Activated naive CD4-positive, alpha-beta T cell treated with anti-CD3 and anti-CD28 coated beads for 36 hours (primary cell): ENCODE measurements at regions of chr20 and their contacts with region 1.

Region 1: GRCh38 chr20:34676642-34677373 is at the start of gene PIGU:
- DNase-seq: peak; percentile 97
- H3K4me3 Mint-ChIP-seq: peak within 1 kb of the TSS; percentile 97
- H3K27ac Mint-ChIP-seq: peak within 1 kb of the TSS; percentile 90
- H3K4me1 Mint-ChIP-seq: peaks cover 29% of the 10 kb centered on the region
- H3K27me3 Mint-ChIP-seq: no peaks in the 10 kb centered on the region
- total RNA-seq, gene PIGU: 18.8 to 18.9 TPM

Region 2: GRCh38 chr20:33489495-33490022 is 1187.2 kb before region 1 on chr20:
- CTCF ChIA-PET with region 1: no interaction called
- intact Hi-C with region 1: loop called (anchors 5 kb)
- DNase-seq: peak; percentile 100
- H3K4me3 Mint-ChIP-seq: peak overlapping the region; percentile 79
- H3K27ac Mint-ChIP-seq: peak overlapping the region; percentile 81
- H3K4me1 Mint-ChIP-seq: peaks cover 17% of the 10 kb centered on the region
- H3K27me3 Mint-ChIP-seq: no peaks in the 10 kb centered on the region

Region 3: GRCh38 chr20:34069341-34070078 is 607.3 kb before region 1 on chr20:
- CTCF ChIA-PET with region 1: no interaction called
- intact Hi-C with region 1: no loop called
- DNase-seq: peak; percentile 72
- H3K4me3 Mint-ChIP-seq: no peak overlapping the region
- H3K27ac Mint-ChIP-seq: no peak overlapping the region
- H3K4me1 Mint-ChIP-seq: peaks cover 28% of the 10 kb centered on the region
- H3K27me3 Mint-ChIP-seq: no peaks in the 10 kb centered on the region

Region 4: DNA sequence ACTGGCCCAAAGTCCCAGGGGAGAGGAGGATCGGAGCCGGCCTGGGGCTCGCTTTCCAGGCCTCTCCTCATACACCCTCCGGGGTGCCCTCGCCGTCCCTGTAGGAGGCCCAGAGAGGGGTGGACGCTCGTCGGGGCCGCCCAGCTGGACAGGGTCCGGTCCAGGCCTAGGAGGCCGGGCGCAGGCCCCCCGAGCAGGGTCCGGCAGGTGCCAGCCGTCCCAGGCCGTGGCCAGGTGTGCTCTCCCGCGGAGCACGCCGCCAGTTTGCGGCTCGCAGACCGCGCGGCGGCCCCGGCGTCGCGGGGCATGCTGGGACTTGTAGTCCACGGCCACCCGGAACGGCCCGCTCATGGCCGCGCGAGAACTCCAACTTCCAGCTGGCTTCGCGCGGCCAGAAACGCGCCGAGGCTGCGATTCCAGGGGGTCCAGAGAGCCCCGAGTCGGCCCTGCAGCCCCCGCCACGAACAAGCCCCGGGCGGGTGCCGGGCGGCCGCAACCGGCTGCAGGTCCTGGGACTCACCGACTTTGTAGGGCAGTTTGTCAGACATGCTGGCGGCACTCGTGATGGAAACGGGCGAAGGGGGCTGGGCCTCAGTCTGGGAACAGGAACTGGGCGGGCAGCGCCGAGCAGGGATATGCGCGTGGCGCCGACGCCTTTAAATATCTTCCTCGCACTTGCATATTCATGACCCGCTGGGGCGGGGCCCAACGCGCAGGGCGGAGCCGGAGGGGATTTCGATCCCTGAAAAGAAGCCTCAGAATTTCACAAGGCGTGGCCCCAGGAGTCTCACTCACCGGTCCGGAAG is 373.9 kb before region 1 on chr20 and contains the start of gene AHCY:
- CTCF ChIA-PET with region 1: no interaction called
- intact Hi-C with region 1: loop called (anchors 1 kb)
- DNase-seq: peak; percentile 95
- H3K4me3 Mint-ChIP-seq: peak within 1 kb of the TSS; percentile 84
- H3K27ac Mint-ChIP-seq: peak within 1 kb of the TSS; percentile 86
- H3K4me1 Mint-ChIP-seq: peaks cover 4% of the 10 kb centered on the region
- H3K27me3 Mint-ChIP-seq: no peaks in the 10 kb centered on the region
- total RNA-seq, gene AHCY: 258 to 261 TPM

Region 5: GRCh38 chr20:34363062-34363464 is 313.7 kb before region 1 on chr20 and contains the start of gene ITCH:
- CTCF ChIA-PET with region 1: no interaction called
- intact Hi-C with region 1: loop called (anchors 2 kb)
- DNase-seq: peak; percentile 96
- H3K4me3 Mint-ChIP-seq: peak within 1 kb of the TSS; percentile 97
- H3K27ac Mint-ChIP-seq: peak within 1 kb of the TSS; percentile 95
- H3K4me1 Mint-ChIP-seq: peaks cover 34% of the 10 kb centered on the region
- H3K27me3 Mint-ChIP-seq: no peaks in the 10 kb centered on the region
- total RNA-seq, gene ITCH: 35.3 to 40.0 TPM

Region 6: GRCh38 chr20:34516247-34517113 is 160.3 kb before region 1 on chr20 and contains the start of gene DYNLRB1:
- CTCF ChIA-PET with region 1: no interaction called
- intact Hi-C with region 1: loop called (anchors 2 kb)
- DNase-seq: peak; percentile 96
- H3K4me3 Mint-ChIP-seq: peak within 1 kb of the TSS; percentile 98
- H3K27ac Mint-ChIP-seq: peak within 1 kb of the TSS; percentile 96
- H3K4me1 Mint-ChIP-seq: peaks cover 29% of the 10 kb centered on the region
- H3K27me3 Mint-ChIP-seq: no peaks in the 10 kb centered on the region
- total RNA-seq, gene DYNLRB1: 81.9 to 92.9 TPM

Region 7: DNA sequence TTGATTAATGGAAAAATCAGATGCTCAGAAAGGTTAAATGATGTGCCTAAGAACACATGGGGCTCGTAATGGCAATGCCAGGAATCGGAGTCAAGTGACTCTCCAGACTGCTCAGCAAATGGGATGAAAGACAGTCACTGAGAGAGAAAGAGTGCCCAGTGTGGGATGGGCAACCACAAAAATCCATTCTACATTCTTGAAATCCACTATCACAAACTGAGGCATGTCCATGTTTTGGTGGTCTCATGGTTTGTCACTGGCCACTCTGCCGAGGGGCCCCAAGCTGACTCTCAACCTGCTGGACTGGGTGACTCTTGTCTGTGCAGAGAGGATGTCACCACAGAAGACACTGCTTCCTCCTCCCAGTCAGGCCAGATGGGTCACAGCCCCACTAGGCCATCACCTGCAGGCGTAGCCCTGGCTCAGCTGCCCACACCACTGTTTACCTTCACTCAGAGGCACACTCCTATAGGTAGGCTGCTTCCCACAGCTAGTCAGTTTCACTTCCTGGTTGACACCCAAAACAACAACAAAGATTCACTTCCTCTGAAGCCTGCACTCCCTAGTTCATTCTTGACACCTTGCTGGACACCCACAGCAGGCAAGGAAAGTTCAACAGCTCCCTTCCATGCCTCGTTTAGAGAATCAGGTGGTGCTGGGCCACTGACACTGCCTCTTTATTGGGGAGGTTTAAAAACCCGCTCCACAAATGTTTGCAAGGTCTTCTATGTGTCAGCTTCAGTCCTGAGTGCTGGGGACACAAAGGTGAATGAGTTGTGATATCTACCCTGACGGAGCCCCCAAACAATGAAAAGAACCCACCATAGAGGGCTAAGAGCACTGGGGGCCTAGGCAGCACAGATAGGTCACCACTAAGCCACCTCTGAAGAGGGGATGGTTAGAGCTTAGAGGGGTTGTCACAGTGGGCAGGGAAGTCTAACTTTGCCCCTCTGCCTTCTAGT is 96.5 kb before region 1 on chr20:
- CTCF ChIA-PET with region 1: no interaction called
- intact Hi-C with region 1: loop called (anchors 1 kb)
- DNase-seq: peak; percentile 26
- H3K4me3 Mint-ChIP-seq: no peak overlapping the region
- H3K27ac Mint-ChIP-seq: peak overlapping the region; percentile 94
- H3K4me1 Mint-ChIP-seq: peaks cover 24% of the 10 kb centered on the region
- H3K27me3 Mint-ChIP-seq: no peaks in the 10 kb centered on the region

Region 8: GRCh38 chr20:34629342-34629741 is 47.5 kb before region 1 on chr20:
- CTCF ChIA-PET with region 1: no interaction called
- intact Hi-C with region 1: no loop called
- DNase-seq: no peak
- H3K4me3 Mint-ChIP-seq: no peak overlapping the region
- H3K27ac Mint-ChIP-seq: no peak overlapping the region
- H3K4me1 Mint-ChIP-seq: no peaks in the 10 kb centered on the region
- H3K27me3 Mint-ChIP-seq: no peaks in the 10 kb centered on the region

Region 9: GRCh38 chr20:34654207-34654744 is 22.5 kb before region 1 on chr20:
- CTCF ChIA-PET with region 1: no interaction called
- intact Hi-C with region 1: no loop called
- DNase-seq: no peak
- H3K4me3 Mint-ChIP-seq: no peak overlapping the region
- H3K27ac Mint-ChIP-seq: no peak overlapping the region
- H3K4me1 Mint-ChIP-seq: no peaks in the 10 kb centered on the region
- H3K27me3 Mint-ChIP-seq: no peaks in the 10 kb centered on the region

Region 10: GRCh38 chr20:34825530-34826362 is 148.9 kb after region 1 on chr20 and contains the start of gene NCOA6:
- CTCF ChIA-PET with region 1: no interaction called
- intact Hi-C with region 1: loop called (anchors 1 kb)
- DNase-seq: peak; percentile 88
- H3K4me3 Mint-ChIP-seq: peak within 1 kb of the TSS; percentile 97
- H3K27ac Mint-ChIP-seq: peak within 1 kb of the TSS; percentile 93
- H3K4me1 Mint-ChIP-seq: peaks cover 37% of the 10 kb centered on the region
- H3K27me3 Mint-ChIP-seq: no peaks in the 10 kb centered on the region
- total RNA-seq, gene NCOA6: 13.9 to 14.1 TPM

Region 11: GRCh38 chr20:34907616-34908469 is 231.0 kb after region 1 on chr20:
- CTCF ChIA-PET with region 1: no interaction called
- intact Hi-C with region 1: no loop called
- DNase-seq: no peak
- H3K4me3 Mint-ChIP-seq: no peak overlapping the region
- H3K27ac Mint-ChIP-seq: no peak overlapping the region
- H3K4me1 Mint-ChIP-seq: peaks cover 15% of the 10 kb centered on the region
- H3K27me3 Mint-ChIP-seq: no peaks in the 10 kb centered on the region